ENCODE measurements at regions of chr7 and their contacts with region 1.

Region 1: GRCh38 chr7:37833107-37833817 is 15.1 kb upstream of the NME8 start:
- DNase-seq: peak; percentile 68
- ATAC-seq: peak; percentile 61
- H3K4me3 ChIP-seq: peak overlapping the region in 4 of 5 experiments; percentile 26 to 53 (median 46)
- H3K4me3 Mint-ChIP-seq: peak overlapping the region; percentile 89
- H3K27ac ChIP-seq: no peak overlapping the region
- H3K27ac Mint-ChIP-seq: peak overlapping the region; percentile 53
- H3K4me1 ChIP-seq: peaks cover 6 to 10% of the 10 kb centered on the region in 2 donors
- H3K4me1 Mint-ChIP-seq: peaks cover 16% of the 10 kb centered on the region
- H3K27me3 ChIP-seq: peaks cover 0 to 6% (median 0%) of the 10 kb centered on the region in 4 experiments
- H3K27me3 Mint-ChIP-seq: peaks cover 8% of the 10 kb centered on the region
- CTCF ChIP-seq: peak; percentile 84

Region 2: DNA sequence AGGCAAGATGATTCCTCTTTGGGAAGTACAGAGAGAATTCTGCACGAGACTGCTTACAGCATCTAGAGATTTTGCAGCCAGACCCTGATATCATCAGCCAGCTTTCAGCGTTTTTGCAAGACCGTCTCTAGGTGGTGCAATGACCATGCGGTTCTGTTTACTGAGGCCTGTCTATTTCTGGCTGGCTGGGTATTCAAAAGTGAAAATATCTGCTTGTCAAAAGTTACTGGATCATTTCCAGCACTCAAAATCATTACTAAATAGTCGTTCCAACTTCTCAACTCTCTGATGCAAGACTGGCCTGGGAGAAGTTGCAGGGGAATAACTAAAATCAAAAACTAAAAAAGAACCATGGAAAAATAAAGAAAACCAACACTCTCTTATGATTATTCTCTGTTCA is 624.7 kb before region 1 on chr7:
- CTCF ChIA-PET with region 1: interaction called, 10 read pairs
- POLR2A ChIA-PET with region 1: no interaction called
- intact Hi-C with region 1: loop called (anchors 1 kb)
- DNase-seq: peak; percentile 53
- ATAC-seq: peak; percentile 81
- H3K4me3 ChIP-seq: no peak overlapping the region
- H3K4me3 Mint-ChIP-seq: no peak overlapping the region
- H3K27ac ChIP-seq: peak overlapping the region in 1 of 2 donors; percentile 31
- H3K27ac Mint-ChIP-seq: peak overlapping the region; percentile 32
- H3K4me1 ChIP-seq: peaks cover 7 to 11% of the 10 kb centered on the region in 2 donors
- H3K4me1 Mint-ChIP-seq: peaks cover 15% of the 10 kb centered on the region
- H3K27me3 ChIP-seq: no peaks in the 10 kb centered on the region
- H3K27me3 Mint-ChIP-seq: no peaks in the 10 kb centered on the region
- CTCF ChIP-seq: peak; percentile 63

Region 3: DNA sequence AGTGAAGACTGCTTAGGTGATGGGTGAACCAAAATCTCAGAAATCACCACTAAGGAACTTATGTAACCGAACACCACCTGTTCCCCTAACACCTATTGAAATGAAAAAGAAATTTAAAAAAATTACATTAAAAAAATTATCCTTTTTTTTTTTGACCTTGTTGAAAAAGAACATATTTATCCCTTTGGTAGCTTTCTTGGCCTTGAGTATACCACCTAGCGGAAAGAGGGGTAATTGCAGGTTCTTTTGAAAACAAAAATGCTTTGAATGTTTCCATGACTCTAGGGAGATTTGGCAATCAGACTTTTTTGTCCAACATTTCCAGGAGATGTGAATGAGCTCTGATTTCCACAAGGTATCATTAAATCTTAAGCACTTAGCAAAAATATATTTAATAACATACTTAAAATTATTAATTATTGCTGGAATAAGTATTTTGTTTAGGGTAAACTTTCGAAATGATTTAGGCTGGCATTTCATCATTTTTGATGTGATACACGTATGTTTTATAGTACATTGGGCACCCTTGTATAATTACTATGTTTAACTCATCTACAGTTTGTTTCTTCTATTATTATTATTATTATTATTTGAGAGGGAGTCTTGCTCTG is 337.6 kb before region 1 on chr7:
- CTCF ChIA-PET with region 1: interaction called, 27 read pairs
- POLR2A ChIA-PET with region 1: no interaction called
- intact Hi-C with region 1: no loop called
- DNase-seq: peak; percentile 52
- ATAC-seq: peak; percentile 68
- H3K4me3 ChIP-seq: no peak overlapping the region
- H3K4me3 Mint-ChIP-seq: no peak overlapping the region
- H3K27ac ChIP-seq: no peak overlapping the region
- H3K27ac Mint-ChIP-seq: no peak overlapping the region
- H3K4me1 ChIP-seq: no peaks in the 10 kb centered on the region
- H3K4me1 Mint-ChIP-seq: no peaks in the 10 kb centered on the region
- H3K27me3 ChIP-seq: no peaks in the 10 kb centered on the region
- H3K27me3 Mint-ChIP-seq: no peaks in the 10 kb centered on the region
- CTCF ChIP-seq: peak; percentile 96

Region 4: GRCh38 chr7:37732253-37732652 is 101.0 kb before region 1 on chr7:
- CTCF ChIA-PET with region 1: interaction called, 8 read pairs
- POLR2A ChIA-PET with region 1: no interaction called
- intact Hi-C with region 1: loop called (anchors 10 kb)
- DNase-seq: peak; percentile 63
- ATAC-seq: peak; percentile 78
- H3K4me3 ChIP-seq: no peak overlapping the region
- H3K4me3 Mint-ChIP-seq: no peak overlapping the region
- H3K27ac ChIP-seq: no peak overlapping the region
- H3K27ac Mint-ChIP-seq: no peak overlapping the region
- H3K4me1 ChIP-seq: peaks cover 4 to 6% of the 10 kb centered on the region in 2 donors
- H3K4me1 Mint-ChIP-seq: peaks cover 2% of the 10 kb centered on the region
- H3K27me3 ChIP-seq: peaks cover 0 to 11% (median 4%) of the 10 kb centered on the region in 4 experiments
- H3K27me3 Mint-ChIP-seq: peaks cover 14% of the 10 kb centered on the region
- CTCF ChIP-seq: peak; percentile 72